Right lobe of liver (tissue), 6 donors: ENCODE measurements at regions of chr14 and their contacts with region 1.

Region 1: DNA sequence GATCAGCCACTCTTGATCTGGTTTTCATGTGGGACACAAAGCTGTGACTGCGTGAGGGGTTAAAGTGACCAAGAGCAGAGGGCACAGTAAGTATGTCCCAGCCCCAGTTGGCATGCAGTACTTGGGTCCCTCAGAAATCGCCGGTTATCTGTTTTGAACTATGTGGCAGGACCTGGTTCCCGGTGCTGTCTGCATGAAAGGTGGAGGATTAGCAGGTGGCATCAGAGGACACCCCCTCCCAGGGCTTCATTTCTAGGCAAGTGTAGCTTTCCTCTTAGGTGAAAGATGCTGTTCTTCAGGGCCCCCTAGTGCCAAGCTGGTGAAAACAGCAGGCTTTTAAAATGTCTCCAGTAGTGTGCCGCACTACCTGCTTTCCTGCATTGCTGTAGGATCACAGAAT is 57.1 kb downstream of the ATG14 start:
- DNase-seq: no peak
- ATAC-seq: peak; percentile 82 to 89 (median 85)
- H3K4me3 ChIP-seq: no peak overlapping the region
- H3K27ac ChIP-seq: no peak overlapping the region
- H3K4me1 ChIP-seq: no peaks in the 10 kb centered on the region
- H3K27me3 ChIP-seq: no peaks in the 10 kb centered on the region
- CTCF ChIP-seq: peak; percentile 53 to 58 (median 56)
- POLR2A ChIP-seq: no peak

Region 2: GRCh38 chr14:55245657-55246268 is 108.7 kb before region 1 on chr14:
- intact Hi-C with region 1: loop called in 1 of 2 experiments (anchors 10 kb)
- DNase-seq: no peak
- ATAC-seq: peak; percentile 63 to 66 (median 66)
- H3K4me3 ChIP-seq: no peak overlapping the region
- H3K27ac ChIP-seq: no peak overlapping the region
- H3K4me1 ChIP-seq: peaks cover 0 to 3% (median 0%) of the 10 kb centered on the region in 4 donors
- H3K27me3 ChIP-seq: peaks cover 0 to 3% of the 10 kb centered on the region in 2 donors
- CTCF ChIP-seq: peak; percentile 53 to 68 (median 66)
- POLR2A ChIP-seq: no peak

Region 3: GRCh38 chr14:55265197-55265596 is 89.3 kb before region 1 on chr14:
- intact Hi-C with region 1: loop called in 1 of 2 experiments (anchors 10 kb)
- DNase-seq: no peak
- ATAC-seq: no peak
- H3K4me3 ChIP-seq: no peak overlapping the region
- H3K27ac ChIP-seq: no peak overlapping the region
- H3K4me1 ChIP-seq: no peaks in the 10 kb centered on the region
- H3K27me3 ChIP-seq: no peaks in the 10 kb centered on the region
- CTCF ChIP-seq: no peak
- POLR2A ChIP-seq: no peak